HCT116 (cell line): ENCODE measurements at regions of chr2 and their contacts with region 1.

Region 1: DNA sequence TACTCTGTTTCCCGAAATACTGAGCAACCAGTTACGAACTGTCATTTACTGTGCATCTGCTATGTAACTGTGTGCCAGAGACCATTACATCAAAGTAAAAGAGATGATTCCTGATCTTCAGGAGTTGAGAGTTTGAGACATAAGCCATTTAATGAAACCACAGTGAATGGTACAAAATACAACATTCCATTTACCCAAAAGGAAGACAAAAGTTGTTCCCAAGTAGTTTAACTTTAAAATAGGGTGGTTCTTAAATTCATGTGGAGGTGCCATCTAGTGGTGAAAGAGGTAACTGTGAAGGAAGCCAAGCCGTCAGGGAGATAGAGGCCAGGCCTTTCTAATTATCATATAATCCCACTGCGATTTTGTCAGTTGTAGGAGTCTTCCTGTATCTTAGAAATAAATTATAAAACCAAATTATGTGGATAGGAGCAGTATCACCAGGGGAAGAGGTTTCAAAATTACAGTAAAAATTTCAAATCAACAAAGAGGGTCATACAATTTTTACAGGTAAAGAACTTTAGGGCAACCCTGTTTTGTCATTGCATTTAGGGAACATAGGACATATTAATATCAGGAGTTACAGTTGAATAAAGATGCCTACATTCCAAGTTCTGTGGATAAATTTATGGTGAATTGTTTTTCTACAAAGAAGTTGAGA is 67.7 kb downstream of the EPAS1 start:
- DNase-seq: peak; percentile 16
- ATAC-seq: peak; percentile 83
- H3K4me3 ChIP-seq: no peak overlapping the region
- H3K27ac ChIP-seq: no peak overlapping the region
- H3K4me1 ChIP-seq: no peaks in the 10 kb centered on the region
- H3K27me3 ChIP-seq: no peaks in the 10 kb centered on the region
- CTCF ChIP-seq: peak; percentile 80 to 90 (median 84)
- POLR2A ChIP-seq: no peak
- RAD21 ChIP-seq: peak; percentile 87

Region 2: DNA sequence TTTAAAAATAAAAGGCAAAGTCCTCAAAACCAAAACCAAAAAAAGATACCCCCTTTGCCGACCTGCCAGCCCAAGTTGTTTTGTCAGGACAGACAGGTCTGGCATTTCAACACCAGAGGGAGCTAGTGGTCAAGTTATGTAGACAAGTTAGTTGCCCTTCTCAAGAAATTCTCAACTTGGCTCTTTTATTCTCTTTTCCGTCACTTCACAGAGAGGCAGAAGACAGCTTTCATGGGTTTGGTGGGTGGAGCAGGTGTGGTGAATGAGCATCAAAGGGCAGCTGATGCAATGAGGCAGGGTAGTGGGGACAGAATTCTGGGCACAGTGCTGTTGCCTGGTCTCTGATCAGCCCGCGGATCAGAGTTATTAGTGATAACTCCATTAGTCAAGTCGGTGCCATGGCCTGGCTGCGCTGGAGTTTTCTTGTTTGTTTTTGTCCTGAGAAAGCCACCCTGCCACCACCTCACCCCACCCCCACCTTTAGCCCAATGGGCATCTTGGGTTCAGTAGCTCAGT is 371.4 kb before region 1 on chr2:
- CTCF ChIA-PET with region 1: interaction called, 11 read pairs
- POLR2A ChIA-PET with region 1: no interaction called
- RAD21 ChIA-PET with region 1: no interaction called
- intact Hi-C with region 1: loop called (anchors 1 kb)
- DNase-seq: peak; percentile 64
- ATAC-seq: peak; percentile 86
- H3K4me3 ChIP-seq: no peak overlapping the region
- H3K27ac ChIP-seq: no peak overlapping the region
- H3K4me1 ChIP-seq: peaks cover 0 to 21% of the 10 kb centered on the region in 2 experiments; a peak in 1 of 4 replicates
- H3K27me3 ChIP-seq: no peaks in the 10 kb centered on the region
- CTCF ChIP-seq: peak; percentile 58 to 82 (median 76); a peak in 5 of 6 replicates
- POLR2A ChIP-seq: no peak
- RAD21 ChIP-seq: peak; percentile 79

Region 3: GRCh38 chr2:46010925-46011490 is 353.9 kb before region 1 on chr2:
- CTCF ChIA-PET with region 1: interaction called, 3 read pairs
- POLR2A ChIA-PET with region 1: no interaction called
- RAD21 ChIA-PET with region 1: no interaction called
- intact Hi-C with region 1: loop called (anchors 1 kb)
- DNase-seq: peak; percentile 19
- ATAC-seq: peak; percentile 76
- H3K4me3 ChIP-seq: no peak overlapping the region
- H3K27ac ChIP-seq: no peak overlapping the region
- H3K4me1 ChIP-seq: peaks cover 0 to 8% of the 10 kb centered on the region in 2 experiments; a peak in 1 of 4 replicates
- H3K27me3 ChIP-seq: no peaks in the 10 kb centered on the region
- CTCF ChIP-seq: peak; percentile 56 to 82 (median 72)
- POLR2A ChIP-seq: no peak
- RAD21 ChIP-seq: peak; percentile 84

Region 4: DNA sequence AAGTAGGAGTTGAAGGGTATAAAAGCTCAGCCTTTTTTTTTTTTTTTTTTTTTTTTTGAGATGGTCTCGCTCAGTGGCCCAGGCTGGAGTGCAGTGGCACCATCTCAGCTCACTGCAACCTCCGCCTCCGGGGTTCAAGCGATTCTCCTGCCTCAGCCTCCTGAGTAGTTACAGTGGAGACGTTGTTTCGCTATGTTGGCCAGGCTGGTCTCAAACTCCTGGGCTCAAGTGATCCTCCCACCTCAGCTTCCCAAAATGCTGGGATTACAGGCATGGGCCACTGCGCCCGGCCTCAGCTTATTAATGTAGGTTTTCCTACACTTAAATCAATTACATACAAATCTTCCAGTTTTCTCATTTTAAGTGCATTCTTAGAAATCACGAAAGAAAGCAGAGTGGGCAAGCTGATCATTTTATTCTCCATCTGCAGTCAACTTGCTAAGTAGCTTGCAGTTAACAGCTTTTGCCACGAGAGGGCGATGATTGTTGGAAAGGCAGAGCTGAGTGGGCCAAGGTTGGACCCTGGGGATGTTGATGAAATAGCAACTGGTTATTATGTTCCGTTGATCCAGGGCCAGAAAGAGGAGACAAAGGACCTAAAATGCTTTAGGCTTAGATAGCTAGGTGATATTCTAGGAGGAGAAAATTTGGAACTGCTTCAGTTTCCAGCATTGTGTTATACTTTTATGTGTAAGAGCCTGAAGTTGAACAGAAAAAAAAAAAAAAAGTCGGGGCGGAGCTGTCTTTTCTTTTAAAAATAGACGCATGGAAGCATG is 302.1 kb before region 1 on chr2:
- CTCF ChIA-PET with region 1: interaction called, 21 read pairs
- POLR2A ChIA-PET with region 1: interaction called, 3 read pairs
- RAD21 ChIA-PET with region 1: no interaction called
- intact Hi-C with region 1: loop called (anchors 1 kb)
- DNase-seq: peak; percentile 54
- ATAC-seq: peak; percentile 85
- H3K4me3 ChIP-seq: no peak overlapping the region
- H3K27ac ChIP-seq: no peak overlapping the region
- H3K4me1 ChIP-seq: no peaks in the 10 kb centered on the region
- H3K27me3 ChIP-seq: no peaks in the 10 kb centered on the region
- CTCF ChIP-seq: peak; percentile 74 to 91 (median 80)
- POLR2A ChIP-seq: no peak
- RAD21 ChIP-seq: peak; percentile 83

Region 5: GRCh38 chr2:46297546-46298271 is 67.2 kb before region 1 on chr2:
- CTCF ChIA-PET with region 1: no interaction called
- POLR2A ChIA-PET with region 1: no interaction called
- RAD21 ChIA-PET with region 1: no interaction called
- intact Hi-C with region 1: loop called (anchors 5 kb)
- DNase-seq: no peak
- ATAC-seq: peak; percentile 76
- H3K4me3 ChIP-seq: peak overlapping the region; percentile 75 to 91
- H3K27ac ChIP-seq: peak overlapping the region; percentile 74
- H3K4me1 ChIP-seq: peaks cover 12 to 39% of the 10 kb centered on the region in 2 experiments; a peak in 3 of 4 replicates
- H3K27me3 ChIP-seq: no peaks in the 10 kb centered on the region
- CTCF ChIP-seq: no peak
- POLR2A ChIP-seq: peak; percentile 19
- RAD21 ChIP-seq: peak; percentile 55

Region 6: GRCh38 chr2:46461011-46461674 is 96.2 kb after region 1 on chr2:
- CTCF ChIA-PET with region 1: no interaction called
- POLR2A ChIA-PET with region 1: no interaction called
- RAD21 ChIA-PET with region 1: interaction called in 1 of 2 experiments, 3 read pairs
- intact Hi-C with region 1: loop called (anchors 2 kb)
- DNase-seq: peak; percentile 36
- ATAC-seq: peak; percentile 78
- H3K4me3 ChIP-seq: no peak overlapping the region
- H3K27ac ChIP-seq: no peak overlapping the region
- H3K4me1 ChIP-seq: no peaks in the 10 kb centered on the region
- H3K27me3 ChIP-seq: no peaks in the 10 kb centered on the region
- CTCF ChIP-seq: peak; percentile 94 to 99 (median 99)
- POLR2A ChIP-seq: no peak
- RAD21 ChIP-seq: peak; percentile 100